OCI-LY7 (cell line): ENCODE measurements at regions of chr4 and their contacts with region 1.

Region 1: GRCh38 chr4:99405433-99406115 is 29.6 kb downstream of the ADH7 start:
- DNase-seq: peak; percentile 52
- H3K4me3 ChIP-seq: no peak overlapping the region
- H3K27ac ChIP-seq: no peak overlapping the region
- H3K4me1 ChIP-seq: no peaks in the 10 kb centered on the region
- CTCF ChIP-seq: peak; percentile 93

Region 2: DNA sequence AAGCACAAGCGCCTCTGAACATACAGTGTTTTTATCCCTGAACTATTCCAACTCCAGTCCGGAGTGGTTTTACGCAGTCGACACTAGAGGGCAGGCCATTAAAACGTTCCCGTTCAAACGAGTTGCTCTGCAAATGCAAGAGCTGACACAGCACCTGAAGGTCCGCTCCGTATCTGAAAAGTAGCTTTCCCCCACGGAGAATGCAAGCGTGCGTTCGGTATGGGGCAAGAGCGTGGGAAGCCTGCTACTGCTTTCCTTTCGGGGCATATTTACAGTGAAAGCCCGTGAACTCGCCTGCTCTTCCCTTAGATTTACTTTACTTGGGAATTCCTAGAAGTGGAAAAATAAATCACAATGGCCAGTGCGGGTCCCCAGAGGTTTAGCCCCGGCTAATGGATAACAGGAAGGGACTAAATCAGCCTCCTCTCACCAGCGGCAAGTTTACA is 937.9 kb before region 1 on chr4:
- CTCF ChIA-PET with region 1: no interaction called
- POLR2A ChIA-PET with region 1: no interaction called
- intact Hi-C with region 1: loop called (anchors 5 kb)
- DNase-seq: peak; percentile 62
- H3K4me3 ChIP-seq: no peak overlapping the region
- H3K27ac ChIP-seq: no peak overlapping the region
- H3K4me1 ChIP-seq: no peaks in the 10 kb centered on the region
- CTCF ChIP-seq: peak; percentile 80

Region 3: DNA sequence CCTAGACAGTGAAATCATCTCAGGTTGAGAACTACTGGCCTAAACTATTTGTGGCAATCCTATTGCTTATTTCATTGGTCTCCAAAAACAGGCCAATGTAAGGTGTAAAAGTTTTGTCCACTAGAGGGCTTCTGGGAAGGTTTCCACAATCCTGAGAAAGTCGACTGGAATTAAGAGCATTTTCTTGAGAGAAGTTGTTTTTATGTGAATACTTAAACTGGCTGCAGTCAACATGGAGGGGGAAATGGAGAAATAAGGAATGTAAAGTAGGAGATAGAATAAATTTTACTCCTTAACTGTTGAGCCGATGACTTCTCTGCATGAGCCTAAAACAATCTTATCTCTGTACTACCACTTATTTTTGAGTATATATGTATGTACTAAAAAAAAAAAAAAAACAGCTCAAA is 465.7 kb before region 1 on chr4:
- CTCF ChIA-PET with region 1: no interaction called
- POLR2A ChIA-PET with region 1: no interaction called
- intact Hi-C with region 1: loop called (anchors 2 kb)
- DNase-seq: peak; percentile 46
- H3K4me3 ChIP-seq: no peak overlapping the region
- H3K27ac ChIP-seq: no peak overlapping the region
- H3K4me1 ChIP-seq: no peaks in the 10 kb centered on the region
- CTCF ChIP-seq: peak; percentile 87

Region 4: GRCh38 chr4:99117876-99118693 is 287.5 kb before region 1 on chr4:
- CTCF ChIA-PET with region 1: no interaction called
- POLR2A ChIA-PET with region 1: no interaction called
- intact Hi-C with region 1: loop called (anchors 2 kb)
- DNase-seq: peak; percentile 24
- H3K4me3 ChIP-seq: no peak overlapping the region
- H3K27ac ChIP-seq: no peak overlapping the region
- H3K4me1 ChIP-seq: no peaks in the 10 kb centered on the region
- CTCF ChIP-seq: peak; percentile 78

Region 5: GRCh38 chr4:99394896-99395295 is 10.7 kb before region 1 on chr4:
- CTCF ChIA-PET with region 1: no interaction called
- POLR2A ChIA-PET with region 1: no interaction called
- intact Hi-C with region 1: no loop called
- DNase-seq: no peak
- H3K4me3 ChIP-seq: no peak overlapping the region
- H3K27ac ChIP-seq: no peak overlapping the region
- H3K4me1 ChIP-seq: no peaks in the 10 kb centered on the region
- CTCF ChIP-seq: no peak

Region 6: GRCh38 chr4:99438405-99438780 is 32.8 kb after region 1 on chr4:
- CTCF ChIA-PET with region 1: no interaction called
- POLR2A ChIA-PET with region 1: no interaction called
- intact Hi-C with region 1: no loop called
- DNase-seq: no peak
- H3K4me3 ChIP-seq: no peak overlapping the region
- H3K27ac ChIP-seq: no peak overlapping the region
- H3K4me1 ChIP-seq: no peaks in the 10 kb centered on the region
- CTCF ChIP-seq: no peak